Activated naive CD4-positive, alpha-beta T cell treated with anti-CD3 and anti-CD28 coated beads for 36 hours (primary cell): ENCODE measurements at regions of chr1 and their contacts with region 1.

Region 1: DNA sequence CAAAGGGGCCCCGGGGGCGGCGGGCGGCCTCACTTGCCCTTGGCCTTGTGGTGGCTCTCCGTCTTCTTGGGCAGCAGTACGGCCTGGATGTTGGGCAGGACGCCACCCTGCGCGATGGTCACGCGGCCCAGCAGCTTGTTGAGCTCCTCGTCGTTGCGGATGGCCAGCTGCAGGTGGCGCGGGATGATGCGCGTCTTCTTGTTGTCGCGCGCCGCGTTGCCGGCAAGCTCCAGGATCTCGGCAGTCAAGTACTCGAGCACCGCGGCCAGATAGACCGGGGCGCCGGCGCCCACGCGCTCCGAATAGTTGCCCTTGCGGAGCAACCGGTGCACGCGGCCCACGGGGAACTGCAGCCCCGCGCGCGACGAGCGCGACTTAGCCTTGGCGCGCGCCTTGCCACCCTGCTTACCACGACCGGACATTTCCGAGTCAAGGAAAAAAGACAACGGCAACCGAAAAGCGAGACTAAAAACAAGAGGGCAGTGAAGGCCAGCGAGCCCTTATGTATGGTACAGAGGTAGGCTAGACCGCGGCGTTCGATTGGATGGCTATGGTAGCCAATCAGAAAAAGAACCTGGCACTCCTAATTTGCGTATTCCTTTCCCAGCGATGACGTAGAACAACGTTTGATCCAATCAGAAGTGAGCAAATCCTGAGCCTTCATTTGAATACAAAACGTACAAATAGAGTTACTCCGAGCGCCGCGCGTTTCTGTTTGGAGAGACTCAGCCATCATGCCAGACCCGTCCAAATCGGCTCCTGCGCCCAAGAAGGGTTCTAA is 29.6 kb upstream of the RNF187 start:
- DNase-seq: peak; percentile 93
- H3K4me3 Mint-ChIP-seq: peak overlapping the region; percentile 95
- H3K27ac Mint-ChIP-seq: peak overlapping the region; percentile 97
- H3K4me1 Mint-ChIP-seq: peaks cover 32% of the 10 kb centered on the region
- H3K27me3 Mint-ChIP-seq: peaks cover 7% of the 10 kb centered on the region

Region 2: DNA sequence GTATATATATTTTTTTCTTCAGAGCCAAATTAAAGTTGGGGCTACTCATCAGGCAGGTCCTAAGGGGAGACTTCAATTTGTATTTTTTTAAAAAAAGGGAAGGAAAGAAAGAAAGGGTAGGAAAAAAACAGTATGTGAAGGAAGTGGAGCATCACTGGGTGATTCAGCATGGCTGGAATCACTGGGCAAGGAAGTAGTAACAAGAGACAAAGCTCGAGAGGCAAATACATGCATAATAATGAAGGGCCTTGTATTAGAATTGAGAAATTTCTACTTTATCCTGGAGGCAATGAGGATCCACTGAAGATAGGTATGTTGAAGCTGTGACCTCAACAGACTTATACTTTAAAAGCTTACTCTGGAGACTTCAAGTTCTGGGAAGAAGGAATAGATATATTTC is 1333.1 kb before region 1 on chr1:
- CTCF ChIA-PET with region 1: no interaction called
- intact Hi-C with region 1: no loop called
- DNase-seq: no peak
- H3K4me3 Mint-ChIP-seq: no peak overlapping the region
- H3K27ac Mint-ChIP-seq: no peak overlapping the region
- H3K4me1 Mint-ChIP-seq: no peaks in the 10 kb centered on the region
- H3K27me3 Mint-ChIP-seq: peaks cover 4% of the 10 kb centered on the region

Region 3: DNA sequence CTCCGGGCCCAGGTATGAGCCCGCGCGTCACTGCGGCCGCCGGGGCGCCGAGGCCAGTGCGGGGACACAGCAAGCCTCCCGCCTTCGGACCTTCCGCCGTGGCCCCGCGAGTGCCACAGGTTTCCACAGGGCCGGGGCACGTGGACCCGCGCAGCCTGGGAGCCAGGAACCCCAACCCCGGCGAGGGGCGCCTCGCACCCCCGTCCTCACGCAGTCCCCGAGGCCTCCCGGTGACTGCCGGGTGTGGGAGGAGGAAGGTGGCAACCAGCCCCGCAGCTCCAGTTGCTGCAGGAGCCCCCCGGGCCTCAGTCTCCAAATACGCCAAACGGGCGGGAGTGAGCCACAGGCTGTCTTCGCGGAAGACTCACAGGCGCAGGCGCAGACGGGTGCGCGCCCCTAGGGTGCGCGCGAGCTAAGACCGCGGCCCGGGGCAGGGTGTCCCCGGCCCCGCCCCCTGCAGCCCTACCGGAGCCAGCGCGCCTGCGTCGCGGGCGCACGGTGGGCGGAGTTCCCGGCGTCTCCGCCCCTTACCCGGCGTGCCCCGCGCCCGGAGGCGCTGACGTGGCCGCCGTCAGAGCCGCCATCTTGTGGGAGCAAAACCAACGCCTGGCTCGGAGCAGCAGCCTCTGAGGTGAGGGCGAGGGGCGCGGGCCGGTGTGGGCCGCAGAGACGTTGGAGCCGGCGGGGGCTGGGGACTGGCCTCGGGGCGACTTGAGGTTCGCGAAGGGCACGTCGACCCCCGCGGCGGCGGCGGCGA is 375.3 kb before region 1 on chr1 and contains the start of gene ARF1:
- CTCF ChIA-PET with region 1: no interaction called
- intact Hi-C with region 1: loop called (anchors 2 kb)
- DNase-seq: peak; percentile 89
- H3K4me3 Mint-ChIP-seq: peak within 1 kb of the TSS; percentile 93
- H3K27ac Mint-ChIP-seq: peak within 1 kb of the TSS; percentile 96
- H3K4me1 Mint-ChIP-seq: peaks cover 50% of the 10 kb centered on the region
- H3K27me3 Mint-ChIP-seq: no peaks in the 10 kb centered on the region
- total RNA-seq, gene ARF1: 346 to 358 TPM

Region 4: DNA sequence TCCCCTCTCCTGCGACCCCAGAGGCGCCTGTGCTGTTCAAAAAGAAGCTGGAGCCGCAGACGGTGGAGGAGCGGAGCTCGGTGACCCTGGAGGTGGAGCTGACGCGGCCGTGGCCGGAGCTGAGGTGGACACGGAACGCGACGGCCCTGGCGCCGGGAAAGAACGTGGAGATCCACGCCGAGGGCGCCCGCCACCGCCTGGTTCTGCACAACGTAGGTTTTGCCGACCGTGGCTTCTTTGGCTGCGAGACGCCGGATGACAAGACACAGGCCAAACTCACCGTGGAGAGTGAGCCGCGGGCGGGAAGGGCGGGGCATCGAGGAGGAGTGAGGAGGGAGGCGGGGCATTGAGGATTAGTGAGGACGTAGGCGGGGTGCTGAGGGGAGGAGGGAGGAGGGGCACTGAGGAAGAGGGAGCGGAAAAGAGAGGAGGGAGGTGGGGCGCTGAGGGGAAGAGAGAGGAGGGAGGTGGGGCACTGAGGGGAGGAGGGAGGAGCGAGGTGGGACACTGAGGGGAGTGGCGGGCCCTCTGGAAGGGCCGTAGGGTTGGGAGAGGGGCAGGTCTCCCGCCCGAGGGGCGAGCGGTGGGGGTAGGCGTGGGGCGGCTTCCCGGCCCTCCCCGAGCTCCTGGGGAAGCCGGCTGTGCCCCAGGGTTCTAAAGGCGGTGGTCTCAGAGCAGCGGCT is 181.7 kb before region 1 on chr1:
- CTCF ChIA-PET with region 1: interaction called, 3 read pairs
- intact Hi-C with region 1: loop called (anchors 2 kb)
- DNase-seq: peak; percentile 96
- H3K4me3 Mint-ChIP-seq: peak overlapping the region; percentile 72
- H3K27ac Mint-ChIP-seq: no peak overlapping the region
- H3K4me1 Mint-ChIP-seq: peaks cover 5% of the 10 kb centered on the region
- H3K27me3 Mint-ChIP-seq: no peaks in the 10 kb centered on the region

Region 5: GRCh38 chr1:228378090-228378872 is 79.3 kb before region 1 on chr1:
- CTCF ChIA-PET with region 1: no interaction called
- intact Hi-C with region 1: loop called (anchors 1 kb)
- DNase-seq: peak; percentile 80
- H3K4me3 Mint-ChIP-seq: peak overlapping the region; percentile 74
- H3K27ac Mint-ChIP-seq: no peak overlapping the region
- H3K4me1 Mint-ChIP-seq: peaks cover 11% of the 10 kb centered on the region
- H3K27me3 Mint-ChIP-seq: peaks cover 14% of the 10 kb centered on the region

Region 6: DNA sequence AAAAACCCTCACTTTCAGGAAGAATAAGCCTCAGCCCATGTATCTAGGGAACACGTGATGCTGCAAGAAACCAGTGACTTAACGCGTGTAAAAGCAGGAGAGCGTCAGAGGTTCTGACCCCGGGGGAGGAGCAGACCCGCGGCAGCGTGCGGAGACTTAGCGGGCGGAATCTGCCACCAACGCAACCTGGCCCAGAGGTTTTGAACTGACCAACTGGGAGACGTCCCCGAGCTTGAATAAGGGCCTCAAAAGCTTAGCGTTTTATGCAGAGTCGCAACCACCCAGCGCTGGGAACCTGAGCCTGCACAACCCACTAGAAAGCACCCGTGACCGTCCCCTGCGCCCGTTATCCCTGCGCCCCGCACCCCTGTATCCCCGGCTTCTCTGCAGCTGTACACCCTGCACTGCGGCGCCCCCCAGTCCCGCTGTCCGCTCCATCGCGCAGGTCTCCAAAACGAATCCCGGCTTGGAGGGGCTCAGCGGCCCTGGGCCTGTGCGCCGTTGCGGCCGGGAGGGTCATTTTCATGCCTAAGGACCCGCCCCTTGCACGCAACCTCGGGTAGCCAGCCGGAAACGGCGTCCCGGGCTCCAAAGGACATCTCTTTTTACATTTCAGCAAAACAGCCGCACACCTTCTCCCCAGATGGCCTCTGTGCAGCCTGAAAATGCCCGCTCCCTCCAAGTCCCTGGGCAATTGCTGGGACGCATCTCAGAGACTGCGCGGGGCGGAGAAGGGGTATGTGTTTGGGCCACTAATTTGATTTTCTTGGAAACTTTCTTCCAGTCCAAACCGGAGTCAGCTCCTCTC is 11.5 kb before region 1 on chr1:
- CTCF ChIA-PET with region 1: no interaction called
- intact Hi-C with region 1: loop called (anchors 1 kb)
- DNase-seq: peak; percentile 68
- H3K4me3 Mint-ChIP-seq: peak overlapping the region; percentile 77
- H3K27ac Mint-ChIP-seq: no peak overlapping the region
- H3K4me1 Mint-ChIP-seq: peaks cover 15% of the 10 kb centered on the region
- H3K27me3 Mint-ChIP-seq: peaks cover 32% of the 10 kb centered on the region

Region 7: DNA sequence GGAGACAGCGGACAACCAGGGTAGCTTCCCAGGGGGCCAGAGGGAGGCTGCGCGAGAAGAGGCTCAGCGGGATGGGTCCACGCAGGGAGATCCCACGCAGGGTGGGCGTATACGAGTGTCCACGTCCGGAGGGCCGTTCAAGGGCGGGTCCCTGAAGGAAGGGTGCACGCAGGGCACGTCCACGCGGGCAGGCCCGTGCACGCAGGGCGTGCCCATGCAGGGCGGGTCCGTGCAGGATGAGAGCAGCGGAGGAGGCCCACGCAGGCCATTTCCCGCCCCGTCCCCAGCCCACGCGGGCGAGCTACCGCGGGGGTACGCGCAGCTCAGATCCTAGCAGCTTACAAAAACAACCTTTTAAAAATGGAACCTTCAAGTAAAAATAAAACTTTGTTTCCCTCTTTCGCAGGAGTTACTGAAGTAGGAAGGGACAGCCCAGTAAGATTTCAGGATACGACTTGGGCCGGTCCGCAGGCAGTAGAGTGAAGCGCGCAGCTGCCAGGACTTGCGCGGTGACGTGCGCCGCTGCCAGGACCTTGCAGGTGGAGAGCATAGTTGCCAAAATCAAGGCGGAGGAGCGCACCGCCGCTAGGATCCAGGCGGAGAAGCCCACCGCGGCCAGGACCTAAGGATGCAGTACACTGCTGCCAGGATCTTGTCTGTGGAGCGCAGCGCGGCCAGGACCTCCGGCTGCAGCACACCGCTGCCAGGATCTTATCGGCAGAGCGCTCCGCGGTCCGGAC is 29.2 kb after region 1 on chr1:
- CTCF ChIA-PET with region 1: interaction called, 14 read pairs
- intact Hi-C with region 1: no loop called
- DNase-seq: peak; percentile 76
- H3K4me3 Mint-ChIP-seq: peak overlapping the region; percentile 95
- H3K27ac Mint-ChIP-seq: peak overlapping the region; percentile 97
- H3K4me1 Mint-ChIP-seq: peaks cover 31% of the 10 kb centered on the region
- H3K27me3 Mint-ChIP-seq: no peaks in the 10 kb centered on the region